Natural killer cell (primary cell): ENCODE measurements at regions of chr1 and their contacts with region 1.

Region 1: DNA sequence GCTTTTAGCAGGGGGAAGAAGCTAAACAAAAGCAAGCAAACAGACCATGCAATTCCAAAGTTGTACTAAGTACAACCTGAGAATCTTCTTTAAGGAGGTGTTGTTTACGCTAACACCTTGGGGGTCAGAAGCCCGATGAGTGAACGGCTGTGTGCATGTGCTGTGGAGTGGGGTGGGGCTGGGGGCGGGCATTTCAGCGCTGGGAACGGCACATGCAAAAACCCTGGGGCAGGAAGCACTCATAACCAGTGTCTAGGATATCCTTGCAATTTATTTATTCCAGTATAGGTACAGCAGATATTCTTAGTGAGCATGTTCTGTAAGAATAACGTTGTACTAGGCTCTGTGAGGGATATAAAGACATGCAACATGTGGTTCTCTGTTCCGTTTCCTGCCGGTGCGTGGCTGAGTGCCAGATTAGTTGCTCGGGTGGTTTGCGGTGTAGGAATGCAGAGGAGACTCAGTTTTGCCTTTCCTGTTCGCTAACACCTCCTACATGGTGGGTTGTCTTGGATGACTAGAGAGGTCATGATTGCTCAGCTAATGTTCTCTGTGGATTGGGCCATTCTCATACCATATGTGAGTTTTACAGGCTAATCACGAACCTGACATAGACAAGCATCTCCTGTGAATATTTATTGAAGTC is 3.7 kb downstream of the FASLG start:
- DNase-seq: peak; percentile 83 to 93
- ATAC-seq: peak; percentile 71 to 86 (median 82)
- H3K4me3 ChIP-seq: peak overlapping the region; percentile 72
- H3K4me3 Mint-ChIP-seq: peak overlapping the region; percentile 92
- H3K27ac ChIP-seq: peak overlapping the region; percentile 90
- H3K27ac Mint-ChIP-seq: peak overlapping the region; percentile 98
- H3K4me1 ChIP-seq: peaks cover 30% of the 10 kb centered on the region
- H3K4me1 Mint-ChIP-seq: peaks cover 82 to 88% of the 10 kb centered on the region in 2 donors
- H3K27me3 ChIP-seq: no peaks in the 10 kb centered on the region
- H3K27me3 Mint-ChIP-seq: no peaks in the 10 kb centered on the region
- CTCF ChIP-seq: no peak

Region 2: DNA sequence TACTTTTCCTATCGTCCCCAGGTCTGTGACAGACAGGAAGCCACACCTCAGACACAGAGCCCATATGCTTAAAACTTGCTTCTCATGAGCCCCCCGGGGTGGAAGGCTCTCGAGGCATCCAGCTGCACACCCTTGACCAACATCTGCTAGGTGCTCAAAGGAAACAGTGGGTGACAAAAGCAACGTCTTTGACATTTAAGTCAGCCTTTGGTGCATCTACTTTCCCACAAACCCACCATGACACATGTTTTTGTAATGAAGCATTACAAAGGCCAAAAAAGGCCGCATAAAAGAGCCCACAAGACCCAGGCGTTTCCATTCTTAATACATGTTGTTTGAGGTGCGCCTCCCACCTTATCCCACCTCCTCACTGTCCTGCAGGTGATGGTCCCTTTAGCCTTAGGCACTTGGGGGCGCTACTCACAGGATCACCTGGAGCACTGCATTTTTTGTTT is 15.4 kb before region 1 on chr1:
- intact Hi-C with region 1: loop called (anchors 1 kb)
- DNase-seq: peak; percentile 28 to 61
- ATAC-seq: peak; percentile 70 to 81 (median 73)
- H3K4me3 ChIP-seq: no peak overlapping the region
- H3K4me3 Mint-ChIP-seq: peak overlapping the region; percentile 13
- H3K27ac ChIP-seq: peak overlapping the region; percentile 47
- H3K27ac Mint-ChIP-seq: peak overlapping the region; percentile 39 to 75
- H3K4me1 ChIP-seq: peaks cover 35% of the 10 kb centered on the region
- H3K4me1 Mint-ChIP-seq: peaks cover 56 to 66% of the 10 kb centered on the region in 2 donors
- H3K27me3 ChIP-seq: no peaks in the 10 kb centered on the region
- H3K27me3 Mint-ChIP-seq: no peaks in the 10 kb centered on the region
- CTCF ChIP-seq: no peak